Astrocyte of the cerebellum (primary cell): ENCODE measurements at regions of chr9 and their contacts with region 1.

Region 1: DNA sequence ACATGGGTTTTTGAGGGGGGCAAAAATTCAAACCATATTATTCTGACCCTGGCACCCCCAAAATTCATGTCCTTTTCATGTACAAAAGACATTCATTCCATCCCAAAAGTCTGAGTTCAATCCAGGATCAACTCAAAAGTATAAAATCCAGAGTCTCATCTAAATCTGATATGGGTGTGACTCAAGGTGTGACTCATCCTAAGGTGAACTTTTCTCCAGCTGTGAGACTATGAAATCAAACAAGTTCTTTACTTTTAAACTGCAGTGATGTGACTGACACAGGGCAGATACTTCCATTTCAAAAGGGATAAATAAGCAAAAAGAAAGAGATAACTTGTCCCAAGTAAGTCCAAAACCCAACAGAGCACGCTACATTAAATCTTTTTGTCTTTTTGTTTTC is 20.6 kb upstream of the CYLC2 start:
- DNase-seq: no peak
- H3K4me3 ChIP-seq: no peak overlapping the region
- CTCF ChIP-seq: no peak

Region 2: GRCh38 chr9:103025796-103026195 is 51.3 kb after region 1 on chr9:
- in situ Hi-C with region 1: loop called (anchors 5 kb)
- DNase-seq: no peak
- H3K4me3 ChIP-seq: no peak overlapping the region
- CTCF ChIP-seq: no peak